ENCODE measurements at regions of chr3 and their contacts with region 1.

Region 1: GRCh38 chr3:46078712-46079400 is 51.6 kb upstream of the XCR1 start:
- DNase-seq: peak; percentile 59 to 92 (median 84)
- ATAC-seq: peak; percentile 97 to 100 (median 100)
- H3K4me3 ChIP-seq: peak overlapping the region in 1 of 4 donors; percentile 10
- H3K27ac ChIP-seq: no peak overlapping the region
- H3K4me1 ChIP-seq: no peaks in the 10 kb centered on the region
- H3K27me3 ChIP-seq: no peaks in the 10 kb centered on the region
- CTCF ChIP-seq: peak; percentile 85 to 97 (median 91)

Region 2: DNA sequence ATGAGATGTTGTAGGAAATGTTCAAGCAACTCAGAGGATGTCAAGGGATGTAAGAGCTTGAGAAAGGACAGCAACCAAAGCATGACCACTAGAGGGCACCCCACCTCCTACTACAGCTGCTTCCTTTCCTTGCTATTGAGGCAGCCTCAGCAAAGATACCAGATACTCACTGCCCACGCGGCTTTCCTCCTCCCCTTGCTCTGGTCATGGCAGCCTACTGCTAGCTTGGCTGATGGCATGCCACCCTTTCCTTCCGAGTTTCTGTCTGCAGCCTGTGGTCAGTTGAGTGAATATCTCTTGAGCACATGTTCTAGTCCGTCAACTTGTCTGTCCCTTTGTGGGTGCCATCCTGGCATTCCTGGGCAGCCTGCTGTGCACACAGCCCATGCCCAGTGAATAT is 140.0 kb before region 1 on chr3:
- intact Hi-C with region 1: loop called (anchors 5 to 10 kb)
- DNase-seq: peak in 5 of 6 donors; percentile 59 to 81 (median 70)
- ATAC-seq: peak; percentile 83 to 94 (median 94)
- H3K4me3 ChIP-seq: no peak overlapping the region
- H3K27ac ChIP-seq: no peak overlapping the region
- H3K4me1 ChIP-seq: no peaks in the 10 kb centered on the region
- H3K27me3 ChIP-seq: no peaks in the 10 kb centered on the region
- CTCF ChIP-seq: peak; percentile 70 to 84 (median 78)

Measured in pancreas (tissue), 10 donors.